Activated CD8-positive, alpha-beta memory T cell treated with anti-CD3 and anti-CD28 coated beads, Interleukin-2, amount 10 ng/mL, durations not matched to agents 7 days and 5 days (primary cell): ENCODE measurements at regions of chr12 and their contacts with region 1.

Region 1: DNA sequence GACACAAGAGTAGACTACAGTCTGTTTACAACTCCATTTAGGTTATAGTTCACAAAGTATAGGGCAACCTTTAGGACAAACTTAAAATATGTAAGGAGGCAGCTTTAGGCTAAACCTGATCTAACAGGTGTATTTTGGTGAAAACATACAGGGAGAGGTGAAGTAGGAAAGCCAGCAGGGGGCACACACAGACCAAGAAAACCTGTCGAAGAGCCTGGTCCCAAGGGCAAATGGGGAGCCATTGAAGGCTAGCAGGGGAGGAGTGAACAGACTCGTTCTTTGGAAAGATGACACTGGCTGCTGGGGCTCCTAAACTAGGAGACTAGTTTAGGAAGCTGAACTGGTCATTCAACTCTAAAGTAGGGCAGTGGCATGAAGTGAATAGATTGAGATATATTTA is 138.8 kb upstream of the WSCD2 start:
- DNase-seq: peak; percentile 43
- ATAC-seq: no peak
- H3K4me3 Mint-ChIP-seq: no peak overlapping the region
- H3K27ac Mint-ChIP-seq: no peak overlapping the region
- H3K4me1 Mint-ChIP-seq: no peaks in the 10 kb centered on the region
- H3K27me3 Mint-ChIP-seq: peaks cover 23% of the 10 kb centered on the region

Region 2: DNA sequence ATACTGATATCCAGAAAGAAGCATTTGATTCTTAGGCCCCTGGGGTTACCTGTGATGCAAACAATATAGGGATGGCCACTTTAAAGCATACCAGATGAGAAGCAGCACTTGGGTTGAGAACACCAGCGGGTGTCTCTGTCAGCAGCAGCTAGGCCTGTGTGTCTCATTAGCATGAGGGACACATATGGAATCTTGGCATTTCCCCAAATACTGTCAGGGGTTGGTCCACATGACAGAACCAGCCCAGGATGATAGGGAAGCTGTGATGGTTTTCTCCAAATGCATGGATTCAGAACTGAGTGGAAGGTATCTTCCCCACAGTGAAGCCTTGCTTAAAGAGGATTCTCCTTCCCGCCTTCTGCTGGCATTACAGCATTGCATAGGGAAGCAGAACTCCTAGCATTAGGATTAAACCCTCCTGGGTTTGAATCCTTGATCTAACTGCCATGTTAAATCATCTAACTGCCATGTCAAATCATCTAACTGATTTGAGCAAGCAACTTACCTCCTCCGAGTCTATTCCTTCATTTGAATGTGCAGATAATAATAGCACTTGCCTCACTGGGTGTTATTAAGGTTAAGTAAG is 27.2 kb after region 1 on chr12:
- CTCF ChIA-PET with region 1: no interaction called
- DNase-seq: no peak
- ATAC-seq: no peak
- H3K4me3 Mint-ChIP-seq: no peak overlapping the region
- H3K27ac Mint-ChIP-seq: no peak overlapping the region
- H3K4me1 Mint-ChIP-seq: no peaks in the 10 kb centered on the region
- H3K27me3 Mint-ChIP-seq: peaks cover 2% of the 10 kb centered on the region

Region 3: GRCh38 chr12:108511633-108512540 is 521.6 kb after region 1 on chr12:
- CTCF ChIA-PET with region 1: interaction called, 14 read pairs
- DNase-seq: peak; percentile 82
- ATAC-seq: no peak
- H3K4me3 Mint-ChIP-seq: peak overlapping the region; percentile 43
- H3K27ac Mint-ChIP-seq: peak overlapping the region; percentile 24
- H3K4me1 Mint-ChIP-seq: peaks cover 29% of the 10 kb centered on the region
- H3K27me3 Mint-ChIP-seq: no peaks in the 10 kb centered on the region